PC-9 (cell line): ENCODE measurements at regions of chr3 and their contacts with region 1.

Region 1: DNA sequence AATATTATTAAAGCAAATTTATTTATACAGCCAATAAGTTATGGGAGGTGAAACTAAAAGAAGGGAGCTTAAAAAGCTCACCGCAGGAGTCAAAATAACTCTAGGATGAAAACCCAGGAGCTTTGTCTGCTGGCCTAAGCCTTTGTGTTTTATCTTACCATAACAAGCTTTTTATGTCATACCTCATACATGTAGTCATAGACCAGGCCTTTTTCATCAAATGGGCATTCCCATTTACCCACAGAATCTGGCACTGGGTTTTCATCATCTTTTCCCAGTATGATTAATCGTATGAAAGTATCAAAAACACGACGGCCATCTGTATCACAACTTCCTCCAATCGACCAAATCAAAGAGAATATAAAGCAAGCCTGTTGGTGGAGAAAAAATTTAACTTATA is 122.8 kb downstream of the DNAH12 start:
- DNase-seq: no peak
- H3K4me3 ChIP-seq: no peak overlapping the region
- H3K27ac ChIP-seq: no peak overlapping the region
- H3K4me1 ChIP-seq: no peaks in the 10 kb centered on the region
- H3K27me3 ChIP-seq: no peaks in the 10 kb centered on the region
- CTCF ChIP-seq: no peak

Region 2: GRCh38 chr3:57512166-57512565 is 90.8 kb after region 1 on chr3:
- CTCF ChIA-PET with region 1: interaction called, 12 read pairs
- POLR2A ChIA-PET with region 1: no interaction called
- intact Hi-C with region 1: no loop called
- DNase-seq: peak in 1 of 2 experiments; percentile 80
- H3K4me3 ChIP-seq: no peak overlapping the region
- H3K27ac ChIP-seq: peak overlapping the region; percentile 62
- H3K4me1 ChIP-seq: peaks cover 31% of the 10 kb centered on the region
- H3K27me3 ChIP-seq: no peaks in the 10 kb centered on the region
- CTCF ChIP-seq: no peak